ENCODE measurements at regions of chr15 and their contacts with region 1.

Region 1: DNA sequence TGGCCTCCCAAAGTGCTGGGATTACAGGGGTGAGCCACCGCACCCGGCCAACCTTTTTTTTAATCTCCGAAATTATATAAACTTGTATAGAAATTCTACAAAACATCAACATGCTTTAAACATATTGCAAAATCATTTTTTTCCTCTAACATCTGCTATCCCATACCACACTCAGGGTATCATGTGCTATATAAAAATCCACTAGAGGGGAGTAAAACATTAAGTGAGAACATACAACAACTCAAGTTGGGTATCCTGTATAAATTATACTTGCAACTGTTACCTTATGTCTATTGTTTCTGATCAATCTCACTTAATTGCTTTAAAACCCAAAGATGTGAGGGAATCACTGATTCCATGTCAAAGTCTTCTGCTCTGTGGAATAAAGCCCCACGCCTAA is 71.9 kb upstream of the FBN1 start:
- DNase-seq: no peak
- H3K4me3 Mint-ChIP-seq: no peak overlapping the region
- H3K27ac Mint-ChIP-seq: no peak overlapping the region
- H3K4me1 Mint-ChIP-seq: peaks cover 14% of the 10 kb centered on the region
- H3K27me3 Mint-ChIP-seq: no peaks in the 10 kb centered on the region
- CTCF ChIP-seq: no peak

Region 2: GRCh38 chr15:48759921-48760320 is 42.5 kb after region 1 on chr15:
- CTCF ChIA-PET with region 1: no interaction called
- intact Hi-C with region 1: no loop called
- DNase-seq: no peak
- H3K4me3 Mint-ChIP-seq: no peak overlapping the region
- H3K27ac Mint-ChIP-seq: no peak overlapping the region
- H3K4me1 Mint-ChIP-seq: peaks cover 16% of the 10 kb centered on the region
- H3K27me3 Mint-ChIP-seq: no peaks in the 10 kb centered on the region
- CTCF ChIP-seq: no peak

Region 3: GRCh38 chr15:48774484-48774883 is 57.0 kb after region 1 on chr15:
- CTCF ChIA-PET with region 1: no interaction called
- intact Hi-C with region 1: no loop called
- DNase-seq: no peak
- H3K4me3 Mint-ChIP-seq: no peak overlapping the region
- H3K27ac Mint-ChIP-seq: no peak overlapping the region
- H3K4me1 Mint-ChIP-seq: no peaks in the 10 kb centered on the region
- H3K27me3 Mint-ChIP-seq: no peaks in the 10 kb centered on the region
- CTCF ChIP-seq: no peak

Region 4: GRCh38 chr15:48855501-48856440 is 138.3 kb after region 1 on chr15:
- CTCF ChIA-PET with region 1: no interaction called
- intact Hi-C with region 1: loop called (anchors 5 kb)
- DNase-seq: peak; percentile 35
- H3K4me3 Mint-ChIP-seq: no peak overlapping the region
- H3K27ac Mint-ChIP-seq: no peak overlapping the region
- H3K4me1 Mint-ChIP-seq: peaks cover 21% of the 10 kb centered on the region
- H3K27me3 Mint-ChIP-seq: no peaks in the 10 kb centered on the region
- CTCF ChIP-seq: no peak